Ascending aorta (tissue), 2 donors: ENCODE measurements at regions of chr13 and their contacts with region 1.

Region 1: DNA sequence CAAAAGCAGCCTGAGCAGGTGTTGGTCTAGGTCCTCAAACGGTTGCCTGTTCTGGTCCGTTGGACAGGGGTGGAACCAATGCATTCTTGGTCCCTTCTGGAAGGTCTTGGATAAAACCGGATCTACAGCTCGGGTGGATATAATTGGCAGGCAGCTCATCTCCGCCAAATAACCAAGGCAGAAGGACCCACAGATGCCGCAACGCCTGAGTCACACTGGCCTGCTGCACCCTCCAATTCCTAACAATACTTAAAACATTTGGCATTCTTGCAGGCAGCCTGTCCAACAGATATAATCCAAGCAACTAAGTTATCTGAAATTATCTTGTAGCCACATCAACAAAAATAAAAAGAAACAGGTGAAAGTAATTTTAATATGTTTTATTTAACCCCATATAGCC is 59.0 kb upstream of the FGF14 start:
- DNase-seq: no peak
- H3K4me3 ChIP-seq: no peak overlapping the region
- H3K27ac ChIP-seq: no peak overlapping the region
- H3K4me1 ChIP-seq: no peaks in the 10 kb centered on the region
- H3K27me3 ChIP-seq: no peaks in the 10 kb centered on the region
- CTCF ChIP-seq: no peak

Region 2: GRCh38 chr13:102091231-102091630 is 369.6 kb before region 1 on chr13:
- intact Hi-C with region 1: no loop called
- DNase-seq: no peak
- H3K4me3 ChIP-seq: no peak overlapping the region
- H3K27ac ChIP-seq: no peak overlapping the region
- H3K4me1 ChIP-seq: no peaks in the 10 kb centered on the region
- H3K27me3 ChIP-seq: no peaks in the 10 kb centered on the region
- CTCF ChIP-seq: no peak

Region 3: GRCh38 chr13:102141625-102142472 is 319.0 kb before region 1 on chr13:
- intact Hi-C with region 1: loop called (anchors 5 kb)
- DNase-seq: no peak
- H3K4me3 ChIP-seq: no peak overlapping the region
- H3K27ac ChIP-seq: no peak overlapping the region
- H3K4me1 ChIP-seq: no peaks in the 10 kb centered on the region
- H3K27me3 ChIP-seq: no peaks in the 10 kb centered on the region
- CTCF ChIP-seq: peak in 2 of 3 experiments; percentile 50 to 67

Region 4: DNA sequence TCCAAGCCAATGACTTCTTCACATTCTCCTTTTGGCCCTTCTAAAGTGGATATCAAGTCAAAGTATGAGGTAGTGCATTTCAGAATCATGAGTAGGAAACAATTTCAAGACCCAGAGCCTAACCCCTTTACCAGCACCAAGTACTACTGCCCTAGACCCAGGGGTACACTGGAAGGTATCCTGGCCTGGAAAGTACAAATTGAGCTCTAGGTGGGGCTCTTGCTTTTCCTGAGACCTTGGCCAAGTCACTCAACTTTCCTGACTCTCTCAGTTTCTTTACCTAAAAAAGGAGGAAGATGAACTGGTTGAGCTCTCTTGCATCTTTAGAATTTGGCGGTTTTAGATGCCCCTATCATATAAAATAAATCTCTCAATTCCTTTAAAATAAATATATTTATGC is 263.6 kb before region 1 on chr13:
- intact Hi-C with region 1: loop called (anchors 5 kb)
- DNase-seq: no peak
- H3K4me3 ChIP-seq: no peak overlapping the region
- H3K27ac ChIP-seq: no peak overlapping the region
- H3K4me1 ChIP-seq: no peaks in the 10 kb centered on the region
- H3K27me3 ChIP-seq: no peaks in the 10 kb centered on the region
- CTCF ChIP-seq: peak in 1 of 3 experiments; percentile 19

Region 5: GRCh38 chr13:102405496-102406100 is 55.2 kb before region 1 on chr13:
- intact Hi-C with region 1: no loop called
- DNase-seq: no peak
- H3K4me3 ChIP-seq: no peak overlapping the region
- H3K27ac ChIP-seq: no peak overlapping the region
- H3K4me1 ChIP-seq: no peaks in the 10 kb centered on the region
- H3K27me3 ChIP-seq: no peaks in the 10 kb centered on the region
- CTCF ChIP-seq: no peak

Region 6: DNA sequence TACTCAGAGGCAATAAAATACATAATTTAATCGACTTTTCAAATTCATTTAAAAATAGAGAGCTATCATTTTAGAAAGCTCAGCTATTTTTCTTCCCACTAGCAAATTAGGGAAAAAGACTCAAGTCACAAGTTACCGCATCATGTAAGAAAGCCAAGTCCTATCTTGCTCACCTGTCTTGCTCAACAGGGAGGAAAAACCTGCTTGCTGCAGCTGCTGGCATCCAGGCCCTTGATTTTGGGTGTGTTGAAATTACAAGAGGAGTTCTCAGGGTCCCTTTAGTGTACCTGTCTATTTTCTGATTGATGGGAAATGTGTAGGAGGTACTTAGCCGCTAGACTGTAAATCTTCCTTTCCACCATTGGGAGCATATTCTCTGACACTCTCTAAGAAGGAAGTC is 583.3 kb after region 1 on chr13:
- intact Hi-C with region 1: no loop called
- DNase-seq: no peak
- H3K4me3 ChIP-seq: no peak overlapping the region
- H3K27ac ChIP-seq: no peak overlapping the region
- H3K4me1 ChIP-seq: no peaks in the 10 kb centered on the region
- H3K27me3 ChIP-seq: no peaks in the 10 kb centered on the region
- CTCF ChIP-seq: no peak